SK-N-SH (cell line): ENCODE measurements at regions of chr6 and their contacts with region 1.

Region 1: GRCh38 chr6:1596088-1596852 is 13.4 kb upstream of the FOXC1 start:
- DNase-seq: peak; percentile 91
- H3K4me3 ChIP-seq: peak overlapping the region; percentile 34 to 60
- H3K27ac ChIP-seq: no peak overlapping the region
- H3K4me1 ChIP-seq: peaks cover 0 to 13% of the 10 kb centered on the region in 2 experiments; a peak in 1 of 4 replicates
- H3K27me3 ChIP-seq: peaks cover 44% of the 10 kb centered on the region
- CTCF ChIP-seq: peak; percentile 92
- EP300 ChIP-seq: no peak
- RAD21 ChIP-seq: peak; percentile 90

Region 2: GRCh38 chr6:1574083-1574761 is 22.0 kb before region 1 on chr6:
- CTCF ChIA-PET with region 1: interaction called, 17 read pairs
- POLR2A ChIA-PET with region 1: no interaction called
- DNase-seq: no peak
- H3K4me3 ChIP-seq: no peak overlapping the region
- H3K27ac ChIP-seq: no peak overlapping the region
- H3K4me1 ChIP-seq: no peaks in the 10 kb centered on the region
- H3K27me3 ChIP-seq: peaks cover 7% of the 10 kb centered on the region; the same call in 1 of the 2 replicates
- CTCF ChIP-seq: no peak
- EP300 ChIP-seq: no peak
- RAD21 ChIP-seq: no peak

Region 3: GRCh38 chr6:1624851-1625781 is 28.8 kb after region 1 on chr6:
- CTCF ChIA-PET with region 1: no interaction called
- POLR2A ChIA-PET with region 1: no interaction called
- DNase-seq: no peak
- H3K4me3 ChIP-seq: no peak overlapping the region; a peak in 1 of 4 replicates
- H3K27ac ChIP-seq: no peak overlapping the region
- H3K4me1 ChIP-seq: peaks cover 0 to 25% of the 10 kb centered on the region in 2 experiments; a peak in 2 of 4 replicates
- H3K27me3 ChIP-seq: no peaks in the 10 kb centered on the region
- CTCF ChIP-seq: no peak
- EP300 ChIP-seq: no peak
- RAD21 ChIP-seq: no peak

Region 4: DNA sequence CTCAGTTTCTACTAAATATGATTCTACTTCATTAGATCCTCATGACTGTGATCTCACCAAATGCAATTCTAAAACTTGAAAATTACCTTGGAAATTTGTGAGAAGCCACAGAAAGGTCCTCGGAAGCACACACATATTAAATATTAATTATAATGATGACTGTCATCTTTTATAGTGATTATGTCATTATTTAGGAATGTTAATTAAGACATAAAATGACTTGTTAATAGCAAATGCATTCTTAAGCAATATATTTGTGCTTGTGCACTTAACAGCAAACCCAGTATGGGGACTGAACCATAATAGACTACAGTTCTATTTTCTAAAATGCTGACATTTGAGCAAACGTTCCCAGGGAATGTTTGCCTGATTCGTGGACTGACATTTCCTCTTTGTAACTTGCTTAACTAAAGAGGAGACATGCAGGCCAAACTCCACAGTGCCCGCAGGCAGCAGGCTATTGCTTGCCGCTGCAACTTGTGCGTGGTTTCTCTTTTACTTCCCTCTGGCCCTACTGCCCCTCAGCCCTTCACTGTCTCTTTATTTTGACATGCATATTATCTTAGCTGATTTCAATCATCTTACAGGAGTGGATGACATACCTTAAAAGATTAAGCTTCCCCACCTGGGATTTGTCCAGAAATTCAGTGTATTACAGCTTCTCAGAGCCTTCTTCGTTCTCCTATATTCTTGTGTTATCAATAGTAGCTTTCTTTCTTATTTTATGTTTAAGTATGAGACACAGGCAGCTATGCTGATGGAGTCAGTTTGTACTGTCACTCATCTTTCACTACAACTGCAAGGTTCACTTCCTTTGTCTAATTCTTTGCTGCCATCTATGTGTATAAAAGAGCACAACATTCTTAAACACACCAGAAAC is 507.6 kb after region 1 on chr6:
- CTCF ChIA-PET with region 1: interaction called, 50 read pairs
- POLR2A ChIA-PET with region 1: no interaction called
- DNase-seq: peak; percentile 58
- H3K4me3 ChIP-seq: peak overlapping the region; percentile 24 to 44; a peak in 2 of 4 replicates
- H3K27ac ChIP-seq: peak overlapping the region; percentile 28 to 43; a peak in 2 of 4 replicates
- H3K4me1 ChIP-seq: peaks cover 7 to 13% of the 10 kb centered on the region in 2 experiments; a peak in 2 of 4 replicates
- H3K27me3 ChIP-seq: no peaks in the 10 kb centered on the region
- CTCF ChIP-seq: peak; percentile 77
- EP300 ChIP-seq: no peak
- RAD21 ChIP-seq: peak; percentile 97

Region 5: DNA sequence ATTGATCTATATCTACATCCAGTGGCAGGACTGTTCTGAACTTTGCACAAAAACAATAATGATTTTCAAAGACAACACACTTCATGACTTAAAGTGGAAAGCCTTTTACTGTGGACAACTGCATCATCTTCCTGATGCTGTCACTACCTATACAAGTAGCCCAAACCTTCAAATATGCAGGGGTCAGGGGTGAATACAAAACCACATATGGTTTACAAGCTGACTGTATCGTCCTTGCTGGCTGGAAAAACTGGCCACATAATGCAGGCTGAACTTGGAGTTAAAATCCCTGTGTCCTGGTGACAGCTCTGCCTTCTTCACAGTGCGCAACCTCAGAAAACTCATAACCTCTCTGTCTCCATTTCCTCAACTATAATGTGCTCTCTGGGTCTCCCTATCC is 520.2 kb after region 1 on chr6:
- CTCF ChIA-PET with region 1: interaction called, 21 read pairs
- POLR2A ChIA-PET with region 1: no interaction called
- DNase-seq: no peak
- H3K4me3 ChIP-seq: no peak overlapping the region
- H3K27ac ChIP-seq: no peak overlapping the region
- H3K4me1 ChIP-seq: no peaks in the 10 kb centered on the region; a peak in 1 of 4 replicates
- H3K27me3 ChIP-seq: no peaks in the 10 kb centered on the region
- CTCF ChIP-seq: no peak
- EP300 ChIP-seq: no peak
- RAD21 ChIP-seq: no peak

Region 6: DNA sequence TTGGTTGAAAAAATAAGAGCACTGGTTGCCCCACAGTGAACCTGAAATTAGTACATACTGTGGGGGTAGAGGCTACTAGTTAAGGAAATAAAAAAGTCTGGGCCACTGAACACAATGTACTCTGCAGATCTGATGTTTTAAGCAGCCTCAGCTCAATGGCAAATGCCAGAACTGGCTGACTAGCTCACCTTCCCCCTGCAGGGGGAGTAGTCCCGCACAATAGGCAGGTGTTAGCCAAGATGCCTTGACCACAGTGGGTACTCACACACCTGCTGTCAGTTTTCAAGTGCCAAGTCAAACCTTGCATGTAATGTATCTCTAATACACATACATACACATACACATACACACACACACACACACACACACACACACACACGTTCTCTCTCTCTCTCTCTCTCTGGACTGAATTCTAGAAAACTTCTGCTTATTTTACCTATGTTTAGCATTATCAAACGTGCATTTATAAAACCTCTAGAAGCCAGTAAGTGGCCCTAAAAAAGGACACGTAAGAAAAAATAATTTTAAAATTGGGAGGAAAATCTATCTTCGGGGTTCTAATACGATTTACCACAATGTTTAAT is 613.0 kb after region 1 on chr6:
- CTCF ChIA-PET with region 1: interaction called, 10 read pairs
- POLR2A ChIA-PET with region 1: no interaction called
- DNase-seq: peak; percentile 40
- H3K4me3 ChIP-seq: no peak overlapping the region
- H3K27ac ChIP-seq: no peak overlapping the region
- H3K4me1 ChIP-seq: no peaks in the 10 kb centered on the region
- H3K27me3 ChIP-seq: no peaks in the 10 kb centered on the region
- CTCF ChIP-seq: peak; percentile 56
- EP300 ChIP-seq: no peak
- RAD21 ChIP-seq: peak; percentile 56

Region 7: DNA sequence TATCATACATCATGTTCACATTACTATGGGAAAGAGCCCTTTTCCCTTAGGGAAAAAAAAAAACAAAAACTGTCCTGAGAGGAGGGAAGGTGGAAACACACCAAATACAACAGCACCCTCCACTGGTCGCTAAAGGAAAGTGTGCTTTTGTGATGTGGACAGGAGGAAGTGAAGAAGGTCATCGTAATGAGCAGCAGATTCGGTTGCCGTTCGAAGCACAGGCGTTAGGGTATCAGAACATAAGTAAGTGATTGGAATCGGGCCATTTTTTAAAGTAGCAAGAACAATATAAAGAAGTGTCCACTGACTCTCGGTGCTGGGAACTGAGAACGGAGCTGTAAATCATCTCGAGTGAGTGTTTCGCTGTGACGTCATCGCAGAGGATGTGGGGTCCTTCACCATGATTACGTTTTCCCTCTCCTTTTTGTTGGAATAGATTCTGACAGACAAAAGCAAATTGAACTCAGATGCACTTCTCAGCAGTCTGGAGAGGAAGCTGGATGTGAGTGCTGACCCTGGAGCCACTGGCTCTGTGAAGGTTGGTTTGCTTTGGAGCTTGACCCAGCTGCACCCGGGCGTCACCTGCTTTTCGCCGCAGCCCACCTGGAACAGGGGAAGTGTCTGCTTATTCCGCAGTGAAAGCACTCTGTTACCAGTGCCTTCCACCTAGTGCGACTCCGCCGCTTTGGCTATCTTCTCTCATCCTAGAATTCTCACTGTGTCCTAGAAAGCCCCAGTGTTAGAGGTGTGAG is 852.7 kb after region 1 on chr6:
- CTCF ChIA-PET with region 1: interaction called, 15 read pairs
- POLR2A ChIA-PET with region 1: no interaction called
- DNase-seq: peak; percentile 69
- H3K4me3 ChIP-seq: peak overlapping the region; percentile 30 to 59
- H3K27ac ChIP-seq: no peak overlapping the region
- H3K4me1 ChIP-seq: peaks cover 0 to 16% of the 10 kb centered on the region in 2 experiments; a peak in 2 of 4 replicates
- H3K27me3 ChIP-seq: no peaks in the 10 kb centered on the region; the same call in 1 of the 2 replicates
- CTCF ChIP-seq: peak; percentile 81
- EP300 ChIP-seq: no peak
- RAD21 ChIP-seq: peak; percentile 81

Region 8: DNA sequence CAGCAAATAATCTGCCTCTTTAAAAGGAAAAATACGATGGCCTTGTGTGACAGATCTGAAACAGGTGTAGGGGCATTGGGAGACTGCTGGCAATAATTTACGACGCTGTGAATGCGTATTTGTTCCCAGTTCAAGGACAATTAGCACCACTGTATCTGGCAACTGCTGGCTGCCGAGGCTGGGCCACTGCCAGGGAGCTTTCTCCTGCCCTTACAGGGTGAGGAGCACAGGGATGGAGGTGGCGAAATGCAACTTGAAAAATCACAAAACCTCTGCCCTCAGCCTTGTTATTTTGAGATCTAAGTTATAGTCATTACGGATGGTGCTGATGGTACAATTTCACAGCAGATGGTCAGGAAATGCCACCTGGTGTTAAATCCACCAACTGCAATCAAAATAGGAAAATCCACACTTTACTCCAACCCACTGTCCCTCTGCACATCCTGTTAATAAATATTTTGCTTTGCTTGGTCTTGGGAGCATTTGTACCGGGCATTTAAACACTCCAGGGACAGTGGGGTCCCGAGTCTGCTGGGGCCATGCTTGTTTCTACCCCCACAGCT is 1148.0 kb after region 1 on chr6:
- CTCF ChIA-PET with region 1: interaction called, 20 read pairs
- POLR2A ChIA-PET with region 1: no interaction called
- DNase-seq: peak; percentile 31
- H3K4me3 ChIP-seq: no peak overlapping the region
- H3K27ac ChIP-seq: no peak overlapping the region
- H3K4me1 ChIP-seq: peaks cover 0 to 10% of the 10 kb centered on the region in 2 experiments; a peak in 3 of 4 replicates
- H3K27me3 ChIP-seq: no peaks in the 10 kb centered on the region
- CTCF ChIP-seq: peak; percentile 48
- EP300 ChIP-seq: no peak
- RAD21 ChIP-seq: peak; percentile 54